Activated CD4-positive, alpha-beta memory T cell treated with anti-CD3 and anti-CD28 coated beads for 36 hours (primary cell): ENCODE measurements at regions of chr7 and their contacts with region 1.

Region 1: DNA sequence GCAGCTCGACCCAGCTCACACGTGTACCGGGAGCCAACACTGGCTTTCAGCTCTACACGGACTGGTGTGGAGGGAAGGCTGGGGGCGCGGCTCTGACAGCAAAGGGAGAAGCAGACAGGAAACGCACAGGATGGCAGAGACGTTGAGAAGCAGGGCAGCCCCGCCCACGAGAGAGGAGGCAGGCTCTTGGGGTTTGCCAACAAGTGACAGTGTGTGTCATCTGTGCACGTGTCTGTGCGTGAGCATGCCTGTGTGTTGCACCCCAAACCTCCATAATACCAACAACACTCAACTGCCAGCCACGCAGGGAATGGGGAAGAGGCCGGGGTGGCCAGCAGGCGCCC is 64.4 kb upstream of the PDGFA start:
- DNase-seq: peak; percentile 96
- H3K4me3 Mint-ChIP-seq: peak overlapping the region; percentile 80
- H3K27ac Mint-ChIP-seq: peak overlapping the region; percentile 93
- H3K4me1 Mint-ChIP-seq: peaks cover 38% of the 10 kb centered on the region
- H3K27me3 Mint-ChIP-seq: no peaks in the 10 kb centered on the region

Region 2: DNA sequence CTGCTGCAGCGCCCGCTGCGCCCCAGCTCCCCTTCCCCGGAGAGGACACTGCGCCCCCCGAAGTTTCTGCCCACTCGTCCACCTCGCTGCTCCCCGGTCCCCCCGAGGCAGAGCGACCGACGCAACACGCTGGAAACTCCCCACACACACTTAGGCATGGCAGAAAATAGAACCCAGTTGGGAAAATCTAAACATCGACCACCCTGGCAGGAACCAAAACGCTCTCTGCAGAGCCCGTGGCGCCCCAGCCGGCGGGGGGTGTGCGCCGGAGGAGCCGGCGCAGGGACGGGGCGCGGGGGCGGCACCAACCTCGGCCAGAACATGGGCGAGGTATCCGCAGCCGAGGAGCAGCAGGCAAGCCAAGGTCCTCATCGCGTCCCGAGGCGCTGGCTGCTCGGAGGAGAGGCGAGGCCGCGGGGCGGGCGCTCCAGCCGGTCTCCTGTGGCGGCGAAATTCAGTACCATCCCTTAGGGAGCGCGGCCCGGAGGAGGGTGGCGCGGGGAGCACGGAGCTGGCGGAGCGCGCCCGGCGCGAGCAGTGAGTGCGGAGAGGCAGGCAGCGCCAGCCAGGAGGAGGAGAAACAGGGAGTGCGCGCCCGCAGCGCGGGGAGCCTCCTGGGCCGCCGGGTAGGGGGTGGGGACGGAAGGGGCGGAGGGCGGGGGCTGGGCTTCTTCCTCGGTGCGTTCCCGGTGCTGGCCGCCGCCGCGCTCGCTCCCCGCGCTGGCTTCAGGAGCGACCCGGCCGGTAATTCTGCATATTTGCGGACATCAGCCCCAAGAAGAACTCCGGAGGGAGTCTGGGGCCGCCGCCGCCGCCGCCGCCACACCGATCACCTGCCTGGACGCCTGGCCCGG is 65.2 kb before region 1 on chr7:
- CTCF ChIA-PET with region 1: no interaction called
- POLR2A ChIA-PET with region 1: no interaction called
- intact Hi-C with region 1: loop called (anchors 5 kb)
- DNase-seq: peak; percentile 66
- H3K4me3 Mint-ChIP-seq: peak overlapping the region; percentile 79
- H3K27ac Mint-ChIP-seq: no peak overlapping the region
- H3K4me1 Mint-ChIP-seq: peaks cover 19% of the 10 kb centered on the region
- H3K27me3 Mint-ChIP-seq: peaks cover 39% of the 10 kb centered on the region

Region 3: DNA sequence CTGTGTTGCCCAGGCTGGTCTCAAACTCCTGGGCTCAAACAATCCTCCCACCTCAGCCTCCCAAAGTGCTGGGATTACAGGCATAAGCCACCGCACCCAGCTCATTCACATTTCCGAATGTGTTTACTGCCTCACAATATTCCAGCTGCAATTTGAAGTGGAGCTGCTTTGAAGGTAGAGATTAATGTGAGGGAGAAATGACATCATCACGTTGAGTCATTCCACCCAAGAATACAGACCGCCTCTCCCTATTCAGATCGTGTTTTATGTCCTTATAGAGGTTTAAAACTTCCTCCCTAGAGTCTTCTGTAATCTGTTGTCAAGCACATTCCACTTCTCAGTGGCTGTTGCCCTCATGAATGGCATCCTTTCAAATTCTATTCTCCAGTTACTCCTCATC is 36.0 kb after region 1 on chr7:
- CTCF ChIA-PET with region 1: interaction called, 3 read pairs
- POLR2A ChIA-PET with region 1: interaction called, 4 read pairs
- intact Hi-C with region 1: loop called (anchors 1 kb)
- DNase-seq: peak; percentile 29
- H3K4me3 Mint-ChIP-seq: no peak overlapping the region
- H3K27ac Mint-ChIP-seq: peak overlapping the region; percentile 97
- H3K4me1 Mint-ChIP-seq: peaks cover 43% of the 10 kb centered on the region
- H3K27me3 Mint-ChIP-seq: no peaks in the 10 kb centered on the region

Region 4: GRCh38 chr7:726084-726853 is 142.2 kb after region 1 on chr7 and contains the start of gene DNAAF5:
- CTCF ChIA-PET with region 1: no interaction called
- POLR2A ChIA-PET with region 1: no interaction called
- intact Hi-C with region 1: loop called (anchors 5 kb)
- DNase-seq: peak; percentile 92
- H3K4me3 Mint-ChIP-seq: peak within 1 kb of the TSS; percentile 86
- H3K27ac Mint-ChIP-seq: peak within 1 kb of the TSS; percentile 76
- H3K4me1 Mint-ChIP-seq: peaks cover 27% of the 10 kb centered on the region
- H3K27me3 Mint-ChIP-seq: no peaks in the 10 kb centered on the region
- total RNA-seq, gene DNAAF5: 26.8 to 29.5 TPM

Region 5: DNA sequence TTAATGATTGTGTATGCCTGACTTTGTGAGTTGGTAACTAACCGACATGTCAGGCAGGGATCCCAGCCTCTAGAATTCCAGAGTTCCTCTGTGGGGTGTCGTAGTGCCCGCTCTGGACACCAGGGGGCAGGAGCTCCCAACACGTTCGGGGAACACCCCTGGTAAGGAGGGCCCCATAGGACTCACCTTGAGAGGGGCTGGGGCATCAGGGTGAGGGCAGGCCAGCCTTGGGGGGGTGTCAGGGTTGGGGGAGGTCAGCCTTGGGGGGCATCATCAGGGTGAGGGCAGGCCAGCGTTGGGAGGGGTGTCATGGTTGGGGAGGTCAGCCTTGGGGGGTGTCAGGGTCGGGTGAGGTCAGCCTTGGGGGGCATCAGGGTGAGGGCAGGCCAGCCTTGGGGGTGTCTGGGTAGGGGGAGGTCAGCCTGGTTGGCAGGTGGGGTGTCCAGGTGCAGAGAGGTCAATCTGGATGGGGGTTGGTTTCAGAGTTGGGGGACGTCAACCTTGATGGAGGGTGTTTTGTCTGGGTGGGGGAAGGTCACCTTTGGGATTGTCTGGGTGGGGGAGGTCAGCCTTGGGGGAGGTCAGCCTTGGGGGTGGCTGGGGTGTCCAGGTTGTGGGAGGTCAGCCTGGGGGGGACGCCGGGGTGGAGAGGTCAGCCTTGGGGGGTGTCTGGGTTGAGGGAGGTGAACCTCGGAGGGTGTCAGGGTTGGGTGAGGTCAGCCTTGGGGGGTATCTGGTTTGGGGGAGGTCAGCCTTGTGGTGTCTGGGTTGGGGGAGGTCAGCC is 202.6 kb after region 1 on chr7:
- CTCF ChIA-PET with region 1: no interaction called
- POLR2A ChIA-PET with region 1: no interaction called
- intact Hi-C with region 1: no loop called
- DNase-seq: peak; percentile 80
- H3K4me3 Mint-ChIP-seq: no peak overlapping the region
- H3K27ac Mint-ChIP-seq: no peak overlapping the region
- H3K4me1 Mint-ChIP-seq: no peaks in the 10 kb centered on the region
- H3K27me3 Mint-ChIP-seq: no peaks in the 10 kb centered on the region